ENCODE measurements at regions of chr11 and their contacts with region 1.

Region 1: DNA sequence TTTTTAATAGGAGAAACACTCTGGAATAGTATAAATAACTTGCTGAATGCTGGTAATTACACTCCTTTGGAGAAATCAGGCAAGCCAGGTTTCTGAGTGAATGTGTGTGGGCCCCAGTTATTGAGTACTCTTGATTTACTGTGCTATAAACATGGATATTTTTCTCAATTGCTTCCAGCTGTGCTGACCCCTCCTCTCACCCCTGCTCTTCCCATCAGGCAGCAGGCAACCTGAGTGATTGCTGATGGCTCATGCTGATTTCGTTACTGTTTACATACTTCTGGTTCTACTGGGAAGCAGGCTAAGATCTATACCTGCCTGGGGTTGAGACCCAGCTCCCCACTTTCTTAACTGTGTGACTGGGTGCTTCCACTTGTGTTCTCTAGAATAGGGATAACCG is 68.5 kb downstream of the DHCR7 start:
- DNase-seq: no peak
- ATAC-seq: no peak
- H3K4me3 ChIP-seq: no peak overlapping the region
- H3K27ac ChIP-seq: no peak overlapping the region
- H3K4me1 ChIP-seq: no peaks in the 10 kb centered on the region
- H3K27me3 ChIP-seq: no peaks in the 10 kb centered on the region

Region 2: GRCh38 chr11:71086675-71087258 is 292.9 kb before region 1 on chr11:
- intact Hi-C with region 1: loop called in 1 of 2 experiments (anchors 5 kb)
- DNase-seq: no peak
- ATAC-seq: no peak
- H3K4me3 ChIP-seq: no peak overlapping the region
- H3K27ac ChIP-seq: no peak overlapping the region
- H3K4me1 ChIP-seq: no peaks in the 10 kb centered on the region
- H3K27me3 ChIP-seq: no peaks in the 10 kb centered on the region